GM10248 (cell line): ENCODE measurements at regions of chr5 and their contacts with region 1.

Region 1: DNA sequence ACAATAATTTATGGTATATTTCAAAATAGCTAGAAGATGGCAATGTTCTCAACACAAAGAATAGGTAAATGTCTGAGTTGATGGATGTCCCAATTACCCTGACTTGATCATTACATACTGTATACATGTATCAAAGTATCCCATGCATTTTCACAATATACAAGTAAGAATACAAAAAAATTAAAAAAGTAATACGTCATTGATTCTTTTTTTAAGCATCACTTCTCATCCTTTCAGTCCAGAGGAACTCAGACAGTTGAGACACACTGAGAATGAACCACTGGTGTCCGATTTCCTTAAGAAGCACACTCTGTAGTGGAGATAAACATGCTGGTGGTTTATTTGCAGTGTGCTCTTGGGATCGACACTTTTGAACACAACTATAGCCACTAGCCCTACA is 197.9 kb upstream of the ITGA1 start:
- DNase-seq: no peak
- CTCF ChIP-seq: no peak

Region 2: DNA sequence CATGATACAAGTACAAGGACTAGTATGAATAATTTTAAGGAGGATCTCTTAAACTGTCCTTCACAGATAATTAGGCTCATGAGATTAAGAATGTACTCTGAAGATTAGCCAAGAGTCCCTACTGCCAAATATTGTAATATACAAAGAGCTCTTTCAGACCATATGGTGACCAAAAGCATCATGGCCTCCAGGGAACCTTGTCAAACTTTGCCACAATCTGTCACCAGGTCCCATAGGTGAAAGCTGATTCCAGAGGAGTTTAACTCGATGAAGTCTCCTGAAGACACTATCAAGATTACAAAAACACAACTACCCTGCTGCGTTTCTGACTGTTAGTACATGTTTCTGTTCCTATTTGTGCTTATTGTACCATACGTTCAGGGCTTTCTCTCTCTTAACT is 197.5 kb before region 1 on chr5:
- CTCF ChIA-PET with region 1: no interaction called
- POLR2A ChIA-PET with region 1: no interaction called
- DNase-seq: no peak
- CTCF ChIP-seq: no peak

Region 3: DNA sequence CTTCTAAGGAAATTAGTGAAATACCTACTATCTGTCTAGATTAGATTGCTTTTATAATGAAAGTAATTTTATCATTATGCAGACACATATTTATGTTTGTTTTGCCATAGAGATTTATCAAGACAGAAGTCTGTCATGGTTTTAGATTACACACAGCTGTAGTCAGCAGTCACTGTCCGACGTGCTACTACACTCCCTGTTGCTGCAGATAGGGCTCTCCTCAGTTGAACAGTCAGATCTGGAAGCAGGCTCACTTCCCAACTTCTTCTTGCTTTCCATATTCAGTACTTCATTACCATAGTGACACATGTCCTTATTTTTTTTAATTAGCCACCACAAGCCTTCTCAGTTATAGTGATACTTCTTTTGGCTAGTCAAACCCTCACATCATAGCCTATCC is 132.0 kb before region 1 on chr5:
- CTCF ChIA-PET with region 1: no interaction called
- POLR2A ChIA-PET with region 1: no interaction called
- DNase-seq: no peak
- CTCF ChIP-seq: no peak

Region 4: DNA sequence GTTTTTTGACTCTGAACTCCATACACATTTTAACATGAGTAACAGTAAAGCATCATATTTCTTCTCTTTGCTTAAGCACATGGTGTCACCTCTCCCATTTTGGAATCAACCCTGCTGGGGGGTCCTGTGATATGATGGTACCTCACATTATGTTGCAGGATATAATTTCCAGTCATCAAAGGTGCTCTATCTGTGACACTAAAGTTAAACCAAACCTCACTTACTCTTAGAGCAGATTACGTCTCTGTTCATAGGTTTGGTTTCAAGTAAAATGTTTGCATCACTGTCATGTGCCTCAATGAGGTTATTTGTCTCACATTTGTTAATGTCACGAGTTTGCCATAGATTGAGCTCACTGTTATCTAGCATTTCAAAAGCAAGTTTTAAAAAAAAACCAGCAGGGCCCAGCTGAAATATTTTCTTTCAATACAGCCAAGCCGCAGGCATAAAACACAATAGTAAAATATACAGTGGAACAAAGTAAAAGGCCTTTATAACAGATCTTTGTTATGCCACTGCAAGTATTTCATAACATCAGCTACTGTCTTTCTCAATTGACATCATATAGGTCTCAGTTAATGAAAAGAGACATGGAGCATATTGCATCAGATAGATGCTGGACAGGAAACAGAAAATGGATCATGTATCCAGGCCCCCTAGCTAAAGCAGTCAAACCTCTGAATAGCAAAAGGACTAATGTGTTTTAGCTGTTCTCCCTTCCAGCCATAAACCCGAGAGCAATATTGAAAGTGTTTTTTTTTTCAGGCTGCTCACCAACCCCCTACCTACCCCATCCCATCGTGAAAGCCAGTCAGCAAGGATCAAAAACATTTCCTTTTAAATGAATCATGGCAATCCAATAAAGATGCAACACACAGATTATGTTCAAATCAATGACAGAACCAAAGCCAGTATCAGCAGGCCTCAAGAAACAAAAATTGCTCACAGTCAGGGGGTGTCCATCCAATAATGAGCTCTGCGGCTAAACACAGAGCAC is 15.8 kb after region 1 on chr5:
- CTCF ChIA-PET with region 1: interaction called, 11 read pairs
- POLR2A ChIA-PET with region 1: no interaction called
- DNase-seq: no peak
- CTCF ChIP-seq: no peak

Region 5: GRCh38 chr5:52620315-52620714 is 30.5 kb after region 1 on chr5:
- CTCF ChIA-PET with region 1: no interaction called
- POLR2A ChIA-PET with region 1: no interaction called
- DNase-seq: no peak
- CTCF ChIP-seq: no peak